ENCODE measurements at regions of chr12 and their contacts with region 1.

Region 1: DNA sequence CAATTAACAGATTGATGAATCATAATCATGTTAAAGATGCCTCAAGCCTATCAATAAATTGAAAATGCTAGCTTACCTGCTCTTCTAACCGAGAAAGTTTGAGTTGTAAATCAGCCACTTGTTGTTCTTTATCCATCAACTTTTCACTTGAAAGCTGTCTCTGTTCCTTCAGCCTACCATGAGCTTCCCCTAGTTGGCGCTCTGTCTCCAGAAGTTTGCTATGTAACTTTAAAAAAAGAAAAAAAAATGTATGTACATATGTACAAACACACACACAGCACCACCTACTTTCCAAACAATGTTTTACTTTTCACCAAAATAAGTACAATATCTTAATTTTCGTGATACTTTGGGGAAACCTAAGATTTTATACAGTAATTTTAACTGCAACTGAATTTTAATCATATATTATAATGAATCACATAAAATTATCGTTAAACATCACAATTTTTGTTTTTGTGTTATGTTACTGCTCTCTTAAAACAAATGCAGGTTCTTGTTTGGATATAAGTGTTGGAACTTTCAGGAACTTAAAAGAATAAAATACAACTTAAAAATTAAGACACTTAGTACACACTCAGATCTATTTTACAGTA is 101.2 kb downstream of the EEA1 start:
- DNase-seq: peak in 6 of 9 experiments; percentile 9 to 61 (median 36)
- ATAC-seq: no peak
- H3K4me3 ChIP-seq: no peak overlapping the region
- H3K4me3 Mint-ChIP-seq: no peak overlapping the region
- H3K27ac ChIP-seq: no peak overlapping the region
- H3K27ac Mint-ChIP-seq: no peak overlapping the region
- H3K4me1 ChIP-seq: no peaks in the 10 kb centered on the region
- H3K4me1 Mint-ChIP-seq: peaks cover under 1% of the 10 kb centered on the region
- H3K27me3 ChIP-seq: no peaks in the 10 kb centered on the region
- H3K27me3 Mint-ChIP-seq: no peaks in the 10 kb centered on the region
- CTCF ChIP-seq: peak; percentile 64

Region 2: GRCh38 chr12:93098077-93098476 is 270.1 kb after region 1 on chr12:
- CTCF ChIA-PET with region 1: interaction called, 3 read pairs
- POLR2A ChIA-PET with region 1: no interaction called
- intact Hi-C with region 1: loop called (anchors 2 to 5 kb)
- DNase-seq: peak; percentile 41 to 79 (median 69)
- ATAC-seq: peak; percentile 83
- H3K4me3 ChIP-seq: no peak overlapping the region
- H3K4me3 Mint-ChIP-seq: no peak overlapping the region
- H3K27ac ChIP-seq: no peak overlapping the region
- H3K27ac Mint-ChIP-seq: no peak overlapping the region
- H3K4me1 ChIP-seq: no peaks in the 10 kb centered on the region
- H3K4me1 Mint-ChIP-seq: peaks cover 9% of the 10 kb centered on the region
- H3K27me3 ChIP-seq: no peaks in the 10 kb centered on the region
- H3K27me3 Mint-ChIP-seq: no peaks in the 10 kb centered on the region
- CTCF ChIP-seq: peak; percentile 65

Region 3: DNA sequence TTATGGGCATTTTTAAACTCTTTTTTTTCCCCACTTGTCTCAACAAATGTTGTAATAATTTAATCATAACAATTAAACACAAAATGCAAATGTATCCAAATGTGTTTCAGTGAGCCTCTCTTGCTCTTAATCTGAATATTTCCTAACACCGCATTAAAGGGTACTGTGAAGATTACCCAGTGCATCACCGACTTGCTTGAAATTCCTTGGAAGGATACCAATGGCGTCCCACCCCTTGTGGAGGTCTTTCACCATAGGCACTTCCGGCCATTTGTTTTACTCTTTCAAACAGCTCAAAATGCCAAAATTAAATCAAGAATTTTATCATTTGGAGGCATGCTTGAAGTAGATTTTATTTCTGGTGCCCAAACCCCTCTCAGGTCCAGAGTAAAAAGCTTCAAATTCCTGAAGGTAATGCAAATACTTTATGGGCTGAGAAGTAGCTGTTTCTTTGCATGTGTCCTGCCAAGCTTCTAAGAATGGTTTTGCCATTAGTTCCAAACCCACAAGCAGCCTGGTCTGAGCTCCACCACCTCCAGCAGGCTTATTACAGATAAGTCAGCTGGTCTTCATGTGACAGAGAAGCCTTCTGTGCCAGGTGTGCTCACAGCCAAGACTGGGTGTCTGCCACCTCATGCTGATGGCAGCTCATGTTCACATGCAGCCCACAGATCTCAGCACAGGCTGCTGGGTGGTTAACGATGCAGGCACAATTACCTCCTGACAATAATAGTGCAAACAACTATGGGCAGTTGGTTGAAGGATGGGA is 533.4 kb after region 1 on chr12:
- CTCF ChIA-PET with region 1: no interaction called
- POLR2A ChIA-PET with region 1: no interaction called
- intact Hi-C with region 1: no loop called
- DNase-seq: no peak
- ATAC-seq: no peak
- H3K4me3 ChIP-seq: no peak overlapping the region
- H3K4me3 Mint-ChIP-seq: no peak overlapping the region
- H3K27ac ChIP-seq: no peak overlapping the region
- H3K27ac Mint-ChIP-seq: no peak overlapping the region
- H3K4me1 ChIP-seq: peaks cover 15% of the 10 kb centered on the region
- H3K4me1 Mint-ChIP-seq: peaks cover 18% of the 10 kb centered on the region
- H3K27me3 ChIP-seq: no peaks in the 10 kb centered on the region
- H3K27me3 Mint-ChIP-seq: no peaks in the 10 kb centered on the region
- CTCF ChIP-seq: no peak